Right ventricle myocardium inferior (tissue), 1 donor: ENCODE measurements at regions of chr3 and their contacts with region 1.

Region 1: GRCh38 chr3:93906245-93906644 is 67.5 kb downstream of the PROS1 start:
- DNase-seq: peak; percentile 74
- ATAC-seq: peak; percentile 74

Region 2: DNA sequence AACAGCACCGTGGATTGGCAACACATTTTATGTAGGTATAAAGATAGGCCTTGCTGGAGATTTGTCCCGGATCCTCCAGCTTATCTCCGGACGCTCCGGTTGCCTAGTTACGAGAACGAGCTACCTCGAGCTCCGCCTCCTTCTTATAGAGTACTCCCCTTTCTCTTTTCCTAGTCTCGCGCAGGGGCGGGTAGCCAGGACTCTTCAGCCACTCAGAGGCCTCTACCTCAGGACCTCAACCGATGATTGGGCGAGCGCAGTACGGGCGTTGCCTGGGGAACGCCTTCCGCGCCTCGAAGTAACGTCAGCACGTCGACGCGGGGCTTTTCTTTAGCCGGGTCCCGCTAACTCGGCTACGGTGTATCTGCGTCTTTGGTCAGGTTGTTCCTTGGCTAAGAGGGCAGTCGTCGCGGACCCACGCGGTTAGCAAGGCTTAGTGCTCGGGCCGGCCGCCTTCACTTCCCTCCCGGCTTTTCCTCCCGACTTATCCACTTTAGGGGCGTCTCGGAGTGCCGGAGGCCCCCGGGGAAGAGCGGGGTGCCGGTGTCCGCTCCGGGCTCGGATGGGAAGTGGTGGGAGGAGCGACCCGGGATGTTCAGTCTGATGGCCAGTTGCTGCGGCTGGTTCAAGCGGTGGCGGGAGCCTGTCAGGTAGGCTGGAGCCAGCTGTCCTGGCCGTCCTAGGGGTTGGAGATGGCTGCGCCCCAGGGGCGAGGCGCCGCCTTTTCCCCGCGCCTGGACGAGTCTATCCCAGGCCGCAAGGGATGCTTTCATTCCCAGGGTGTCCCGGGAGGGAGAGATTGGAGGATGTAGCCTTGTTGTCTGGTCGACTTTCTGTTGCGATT is 73.8 kb after region 1 on chr3 and contains the start of gene ARL13B:
- intact Hi-C with region 1: loop called (anchors 10 kb)
- DNase-seq: peak; percentile 98
- ATAC-seq: peak; percentile 100
- total RNA-seq, gene ARL13B: 3.4 TPM

Region 3: DNA sequence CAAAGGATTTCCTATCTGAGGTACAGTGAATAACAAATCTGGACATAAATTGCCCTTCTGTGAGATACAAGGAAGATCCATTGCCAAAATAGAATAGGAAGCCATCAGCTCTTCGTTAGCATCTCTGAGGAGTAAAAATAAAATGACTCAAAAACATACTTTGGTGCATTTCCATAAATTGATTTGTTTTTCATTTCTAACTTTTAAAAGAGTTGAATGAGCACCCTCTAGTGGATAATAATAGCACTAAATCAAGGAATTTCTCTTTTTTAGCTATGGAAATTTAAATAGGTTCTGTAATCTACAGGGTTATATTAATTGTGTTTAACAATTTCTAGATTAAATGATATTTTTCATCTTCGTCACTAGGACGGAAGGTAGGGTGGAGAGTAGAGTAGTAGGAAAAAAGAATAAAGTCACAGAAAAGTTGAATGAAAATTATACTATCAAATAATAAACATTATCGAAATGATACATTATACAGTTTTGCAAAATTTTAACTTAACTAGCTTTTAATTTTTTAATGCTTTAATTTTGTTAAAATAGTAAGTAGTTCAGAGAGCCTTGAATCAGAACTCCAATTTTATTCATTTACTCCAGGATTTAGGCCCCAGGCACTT is 163.1 kb after region 1 on chr3:
- intact Hi-C with region 1: loop called (anchors 5 kb)
- DNase-seq: no peak
- ATAC-seq: no peak